ENCODE measurements at regions of chr1 and their contacts with region 1.

Region 1: GRCh38 chr1:119544165-119544762 is 37.3 kb downstream of the HSD3B1 start:
- DNase-seq: peak; percentile 23

Region 2: GRCh38 chr1:119611701-119612113 is 67.4 kb after region 1 on chr1:
- CTCF ChIA-PET with region 1: interaction called, 11 read pairs
- POLR2A ChIA-PET with region 1: no interaction called
- DNase-seq: peak; percentile 75

Measured in HEK293T (cell line).